Panc1 (cell line): ENCODE measurements at regions of chr1 and their contacts with region 1.

Region 1: GRCh38 chr1:27203946-27204345 is 30.5 kb upstream of the WDTC1 start:
- DNase-seq: no peak
- ATAC-seq: no peak
- H3K4me3 ChIP-seq: no peak overlapping the region
- H3K27ac ChIP-seq: no peak overlapping the region
- H3K4me1 ChIP-seq: no peaks in the 10 kb centered on the region
- H3K27me3 ChIP-seq: no peaks in the 10 kb centered on the region
- CTCF ChIP-seq: no peak

Region 2: GRCh38 chr1:27004471-27005165 is 199.3 kb before region 1 on chr1:
- CTCF ChIA-PET with region 1: no interaction called
- POLR2A ChIA-PET with region 1: interaction called, 10 read pairs
- in situ Hi-C with region 1: no loop called
- intact Hi-C with region 1: no loop called
- DNase-seq: no peak
- ATAC-seq: peak; percentile 17; the same call in 1 of the 2 replicates
- H3K4me3 ChIP-seq: no peak overlapping the region
- H3K27ac ChIP-seq: peak overlapping the region; percentile 62
- H3K4me1 ChIP-seq: peaks cover 73% of the 10 kb centered on the region
- H3K27me3 ChIP-seq: no peaks in the 10 kb centered on the region
- CTCF ChIP-seq: no peak

Region 3: DNA sequence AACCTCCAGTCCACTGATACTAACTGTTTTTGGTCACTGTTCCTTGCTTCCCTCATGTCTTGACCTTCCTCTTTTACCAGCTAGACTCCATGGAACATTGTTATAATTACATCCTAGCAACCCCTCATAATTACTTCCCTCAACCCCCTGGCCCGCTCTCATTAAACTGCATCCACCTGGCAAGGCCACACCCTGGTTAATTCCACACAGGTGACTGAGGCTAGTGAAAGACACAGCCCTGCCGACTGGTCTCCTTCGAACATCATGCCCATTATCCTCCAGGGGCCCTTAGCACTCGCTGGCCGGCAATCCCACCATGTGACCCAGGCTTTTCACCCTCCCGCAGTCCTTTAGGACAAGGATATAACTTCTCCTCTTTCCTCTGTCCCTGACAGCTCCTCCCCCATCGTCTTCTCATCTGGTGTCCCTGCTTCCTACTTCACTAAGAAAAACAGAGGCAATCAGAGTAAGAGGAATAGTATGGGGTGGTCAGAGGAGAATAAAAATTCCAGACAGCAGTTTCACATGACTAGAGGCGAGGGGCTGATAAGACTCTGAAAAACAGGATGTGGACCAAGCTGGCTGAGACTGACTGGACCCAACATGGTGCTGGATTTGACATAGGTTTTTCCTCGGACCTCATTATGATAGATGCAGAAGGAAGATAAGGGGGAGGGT is 182.5 kb before region 1 on chr1:
- CTCF ChIA-PET with region 1: no interaction called
- POLR2A ChIA-PET with region 1: interaction called, 12 read pairs
- in situ Hi-C with region 1: no loop called
- intact Hi-C with region 1: no loop called
- DNase-seq: no peak
- ATAC-seq: no peak
- H3K4me3 ChIP-seq: no peak overlapping the region
- H3K27ac ChIP-seq: no peak overlapping the region
- H3K4me1 ChIP-seq: no peaks in the 10 kb centered on the region
- H3K27me3 ChIP-seq: no peaks in the 10 kb centered on the region
- CTCF ChIP-seq: no peak

Region 4: GRCh38 chr1:27218736-27219135 is 14.8 kb after region 1 on chr1:
- CTCF ChIA-PET with region 1: no interaction called
- POLR2A ChIA-PET with region 1: no interaction called
- in situ Hi-C with region 1: no loop called
- intact Hi-C with region 1: no loop called
- DNase-seq: no peak
- ATAC-seq: no peak
- H3K4me3 ChIP-seq: no peak overlapping the region
- H3K27ac ChIP-seq: no peak overlapping the region
- H3K4me1 ChIP-seq: no peaks in the 10 kb centered on the region
- H3K27me3 ChIP-seq: no peaks in the 10 kb centered on the region
- CTCF ChIP-seq: no peak

Region 5: GRCh38 chr1:27349784-27350662 is 146.1 kb after region 1 on chr1:
- CTCF ChIA-PET with region 1: interaction called, 10 read pairs
- POLR2A ChIA-PET with region 1: no interaction called
- in situ Hi-C with region 1: no loop called
- intact Hi-C with region 1: no loop called
- DNase-seq: no peak
- ATAC-seq: peak; percentile 89
- H3K4me3 ChIP-seq: peak overlapping the region; percentile 46 to 59
- H3K27ac ChIP-seq: peak overlapping the region; percentile 83
- H3K4me1 ChIP-seq: peaks cover 19% of the 10 kb centered on the region
- H3K27me3 ChIP-seq: no peaks in the 10 kb centered on the region
- CTCF ChIP-seq: no peak

Region 6: DNA sequence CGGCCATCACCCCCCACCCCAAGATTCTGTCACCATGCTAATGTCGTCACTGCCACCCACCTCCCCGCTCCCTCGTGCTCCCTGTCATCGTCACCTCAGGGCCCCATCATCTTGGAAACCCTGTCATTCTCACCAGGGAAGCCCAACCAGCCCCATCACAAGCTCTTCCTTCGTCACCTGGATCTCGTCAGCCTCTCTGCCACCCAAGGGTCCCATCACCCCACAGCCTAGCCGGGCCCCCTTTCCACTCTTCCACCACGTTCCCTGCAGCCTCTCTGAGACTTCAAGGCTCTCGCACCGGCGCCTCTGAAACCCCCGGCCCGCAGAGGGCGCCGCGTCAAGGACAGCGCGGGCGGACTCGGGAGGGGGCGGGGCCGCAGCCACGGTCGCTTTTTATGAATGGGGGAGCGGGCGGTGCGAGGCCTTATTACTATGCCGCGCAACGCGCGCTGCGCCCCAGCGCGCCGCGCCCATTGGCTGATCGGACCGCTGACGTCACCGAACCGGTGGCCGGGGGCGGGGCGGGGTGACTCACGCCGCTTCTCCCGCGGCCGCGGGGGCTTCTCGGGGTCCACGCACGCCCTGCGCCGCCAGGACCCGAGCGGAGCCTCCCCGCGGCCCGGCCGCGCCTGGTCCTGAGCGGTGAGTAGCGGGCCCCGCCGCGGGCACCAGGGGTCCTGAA is 188.3 kb after region 1 on chr1 and contains the start of gene GPR3:
- CTCF ChIA-PET with region 1: interaction called, 12 read pairs
- POLR2A ChIA-PET with region 1: no interaction called
- in situ Hi-C with region 1: no loop called
- intact Hi-C with region 1: no loop called
- DNase-seq: no peak
- ATAC-seq: peak; percentile 96
- H3K4me3 ChIP-seq: peak within 1 kb of the TSS; percentile 65 to 71
- H3K27ac ChIP-seq: peak within 1 kb of the TSS; percentile 69
- H3K4me1 ChIP-seq: peaks cover 6% of the 10 kb centered on the region
- H3K27me3 ChIP-seq: no peaks in the 10 kb centered on the region
- CTCF ChIP-seq: peak; percentile 86
- total RNA-seq, gene GPR3: 0.95 TPM

Region 7: GRCh38 chr1:27504588-27505419 is 300.9 kb after region 1 on chr1:
- CTCF ChIA-PET with region 1: no interaction called
- POLR2A ChIA-PET with region 1: interaction called, 10 read pairs
- in situ Hi-C with region 1: no loop called
- intact Hi-C with region 1: no loop called
- DNase-seq: no peak
- ATAC-seq: peak; percentile 67
- H3K4me3 ChIP-seq: no peak overlapping the region
- H3K27ac ChIP-seq: peak overlapping the region; percentile 71
- H3K4me1 ChIP-seq: peaks cover 13% of the 10 kb centered on the region
- H3K27me3 ChIP-seq: no peaks in the 10 kb centered on the region
- CTCF ChIP-seq: no peak